Activated naive CD4-positive, alpha-beta T cell treated with anti-CD3 and anti-CD28 coated beads for 36 hours (primary cell): ENCODE measurements at regions of chr19 and their contacts with region 1.

Region 1: GRCh38 chr19:54674021-54674617 is 11.3 kb downstream of the LILRB4 start:
- DNase-seq: no peak
- H3K4me3 Mint-ChIP-seq: no peak overlapping the region
- H3K27ac Mint-ChIP-seq: no peak overlapping the region
- H3K4me1 Mint-ChIP-seq: no peaks in the 10 kb centered on the region
- H3K27me3 Mint-ChIP-seq: peaks cover 15% of the 10 kb centered on the region

Region 2: GRCh38 chr19:54297760-54298305 is 376.3 kb before region 1 on chr19:
- CTCF ChIA-PET with region 1: no interaction called
- intact Hi-C with region 1: no loop called
- DNase-seq: no peak
- H3K4me3 Mint-ChIP-seq: no peak overlapping the region
- H3K27ac Mint-ChIP-seq: no peak overlapping the region
- H3K4me1 Mint-ChIP-seq: no peaks in the 10 kb centered on the region
- H3K27me3 Mint-ChIP-seq: peaks cover 15% of the 10 kb centered on the region

Region 3: DNA sequence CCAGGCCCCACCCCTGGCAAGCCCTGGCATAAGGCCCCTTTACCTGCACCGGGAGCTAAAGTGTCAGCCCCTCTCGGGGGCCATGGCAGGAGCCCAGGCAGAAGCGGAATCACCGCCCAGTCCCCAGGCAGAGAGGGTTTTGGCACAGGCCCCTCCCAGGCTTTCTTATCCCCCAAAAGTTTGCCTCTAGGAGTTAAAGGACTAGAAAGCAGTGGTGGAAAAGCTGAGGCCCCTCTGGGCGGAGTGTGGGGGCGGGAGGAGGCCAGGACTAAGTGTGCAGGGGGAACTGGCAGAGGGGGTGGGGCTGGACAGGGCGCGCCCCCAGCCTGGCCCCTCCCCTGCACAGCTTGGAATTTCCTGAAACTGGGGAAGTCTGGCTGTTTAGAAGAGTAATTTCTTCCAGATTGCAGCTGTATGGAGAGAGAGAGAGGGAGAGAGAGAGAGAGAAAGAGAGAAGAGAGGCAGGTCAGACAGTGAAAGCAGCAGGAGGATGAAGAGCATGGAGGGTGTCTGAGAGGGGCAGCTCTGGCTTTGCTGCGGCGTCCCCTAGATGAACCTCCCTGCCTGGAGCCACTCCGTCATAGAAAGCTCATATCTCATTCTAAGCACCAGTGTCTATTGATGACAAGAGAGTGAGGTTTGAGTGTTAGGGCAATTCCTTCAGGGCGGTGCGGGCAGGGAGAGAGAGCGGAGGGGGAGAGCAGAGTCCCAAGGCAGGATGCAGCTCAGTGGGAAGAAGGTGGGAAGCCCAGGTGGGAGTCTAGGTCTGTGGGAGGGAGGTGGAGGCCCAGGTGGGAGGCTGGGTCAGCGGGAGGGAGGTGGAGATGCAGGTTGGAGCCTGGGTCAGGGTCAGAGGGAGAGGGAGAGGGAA is 200.9 kb before region 1 on chr19 and contains the start of gene CDC42EP5:
- CTCF ChIA-PET with region 1: interaction called, 62 read pairs
- intact Hi-C with region 1: no loop called
- DNase-seq: no peak
- H3K4me3 Mint-ChIP-seq: no peak within 1 kb of the TSS
- H3K27ac Mint-ChIP-seq: no peak within 1 kb of the TSS
- H3K4me1 Mint-ChIP-seq: peaks cover 9% of the 10 kb centered on the region
- H3K27me3 Mint-ChIP-seq: peaks cover 38% of the 10 kb centered on the region
- total RNA-seq, gene CDC42EP5: not detected

Region 4: DNA sequence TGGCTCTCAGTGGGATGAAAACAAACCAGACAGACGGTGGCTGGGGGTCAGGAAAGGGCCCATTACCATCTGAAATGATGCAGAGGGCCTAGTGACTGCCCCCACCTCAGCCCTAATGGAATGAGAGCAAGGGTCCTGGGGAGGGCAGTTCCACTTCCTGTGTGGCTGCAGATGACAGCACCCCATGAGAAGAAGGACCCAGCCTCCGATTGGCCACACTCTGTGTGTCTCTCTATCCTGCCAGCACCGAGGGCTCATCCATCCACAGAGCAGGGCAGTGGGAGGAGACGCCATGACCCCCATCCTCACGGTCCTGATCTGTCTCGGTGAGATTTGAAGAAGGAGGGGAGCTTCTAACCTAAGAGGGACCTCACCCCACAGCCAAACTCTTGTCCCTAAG is 43.3 kb before region 1 on chr19:
- CTCF ChIA-PET with region 1: no interaction called
- intact Hi-C with region 1: no loop called
- DNase-seq: no peak
- H3K4me3 Mint-ChIP-seq: no peak overlapping the region
- H3K27ac Mint-ChIP-seq: no peak overlapping the region
- H3K4me1 Mint-ChIP-seq: no peaks in the 10 kb centered on the region
- H3K27me3 Mint-ChIP-seq: peaks cover 43% of the 10 kb centered on the region

Region 5: DNA sequence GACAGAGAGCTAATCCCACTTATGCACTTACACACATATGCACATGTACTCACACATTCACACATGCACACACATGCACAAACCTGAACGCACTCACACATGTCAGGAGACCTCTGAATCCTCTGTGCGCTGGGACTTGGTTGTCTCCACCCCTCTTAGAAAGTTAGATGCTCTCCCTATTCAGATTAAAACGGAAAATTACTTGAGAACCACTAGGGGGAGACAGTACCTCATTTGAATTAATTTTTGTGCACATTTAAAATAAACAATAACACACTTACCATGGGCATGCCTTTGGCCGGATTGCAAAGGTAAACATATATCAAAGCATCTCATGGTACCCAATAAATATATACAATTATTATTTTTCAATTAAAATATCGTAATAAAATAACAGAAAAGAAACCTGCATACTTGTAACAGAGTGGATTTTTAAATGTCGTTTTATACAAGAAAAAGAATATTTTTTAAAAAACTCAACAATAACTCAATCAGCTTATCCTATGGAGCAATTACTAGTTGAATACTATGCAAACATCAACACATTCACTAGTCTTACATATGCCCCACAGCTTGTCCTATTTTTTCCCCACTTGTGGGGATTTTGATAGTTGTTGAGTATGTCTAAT is 20.8 kb before region 1 on chr19:
- CTCF ChIA-PET with region 1: interaction called, 29 read pairs
- intact Hi-C with region 1: no loop called
- DNase-seq: no peak
- H3K4me3 Mint-ChIP-seq: no peak overlapping the region
- H3K27ac Mint-ChIP-seq: no peak overlapping the region
- H3K4me1 Mint-ChIP-seq: no peaks in the 10 kb centered on the region
- H3K27me3 Mint-ChIP-seq: no peaks in the 10 kb centered on the region

Region 6: DNA sequence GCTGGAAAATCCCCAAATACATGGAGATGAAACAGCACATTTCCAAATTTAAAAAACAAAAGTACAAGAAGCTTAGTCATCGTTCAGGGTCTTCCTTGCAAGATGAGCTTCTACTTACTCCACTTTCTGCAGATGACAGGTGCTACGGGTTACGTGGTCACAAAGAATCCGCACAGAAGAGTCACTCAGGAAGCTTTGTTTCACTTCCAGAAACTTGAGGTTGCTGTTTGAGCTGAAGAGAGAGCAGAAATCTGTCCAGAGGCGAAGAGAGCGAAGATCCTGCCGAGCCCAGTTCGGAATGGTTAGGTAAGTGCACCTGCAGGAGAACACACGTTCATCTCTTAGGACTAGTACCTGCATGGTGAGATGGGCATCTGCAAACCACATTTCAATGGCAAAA is 263.8 kb after region 1 on chr19:
- CTCF ChIA-PET with region 1: no interaction called
- intact Hi-C with region 1: no loop called
- DNase-seq: peak; percentile 30
- H3K4me3 Mint-ChIP-seq: no peak overlapping the region
- H3K27ac Mint-ChIP-seq: no peak overlapping the region
- H3K4me1 Mint-ChIP-seq: peaks cover 3% of the 10 kb centered on the region
- H3K27me3 Mint-ChIP-seq: peaks cover 9% of the 10 kb centered on the region

Region 7: DNA sequence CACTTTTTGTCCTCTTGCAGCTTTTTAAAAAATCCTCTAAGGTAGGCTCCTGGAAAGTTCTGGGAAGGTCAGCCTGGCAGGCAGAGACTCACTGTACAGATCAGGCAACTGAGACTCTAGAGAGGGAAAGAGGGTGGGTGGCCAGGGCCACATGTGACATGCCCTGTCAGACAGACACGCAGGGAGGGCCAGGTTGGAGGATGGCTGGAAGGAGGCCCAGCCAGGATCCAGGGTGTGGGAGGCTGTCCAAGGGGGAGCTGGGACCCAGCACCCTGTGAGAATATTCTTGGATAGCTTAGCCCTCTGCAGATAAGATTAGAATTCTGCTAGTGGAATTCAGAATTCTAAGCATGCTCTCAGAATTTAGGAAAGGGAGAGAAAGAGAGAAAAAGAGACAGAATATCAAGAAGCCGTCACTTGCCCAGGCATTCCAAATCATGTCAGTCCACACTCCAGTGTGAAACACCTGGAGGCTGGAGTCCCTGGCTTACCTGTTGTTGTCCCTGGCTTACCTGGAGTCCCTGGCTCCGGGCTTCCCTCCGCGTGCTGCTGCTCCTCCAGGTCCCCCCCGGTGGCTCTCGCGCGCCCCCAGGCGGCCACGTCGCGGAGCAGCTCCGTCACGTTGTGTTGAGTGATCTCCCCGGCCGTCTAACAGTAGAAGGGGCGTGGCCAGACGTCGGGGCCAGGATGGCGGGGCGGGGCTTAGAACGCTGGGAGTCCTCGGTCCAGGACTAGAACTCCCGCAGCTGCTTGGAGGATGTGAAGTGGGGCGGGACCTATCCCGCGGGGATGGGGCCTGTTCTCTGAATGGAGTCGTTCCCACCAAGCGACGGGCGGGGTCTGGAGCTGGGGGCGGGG is 486.2 kb after region 1 on chr19:
- CTCF ChIA-PET with region 1: no interaction called
- intact Hi-C with region 1: no loop called
- DNase-seq: peak; percentile 94
- H3K4me3 Mint-ChIP-seq: no peak overlapping the region
- H3K27ac Mint-ChIP-seq: no peak overlapping the region
- H3K4me1 Mint-ChIP-seq: peaks cover 9% of the 10 kb centered on the region
- H3K27me3 Mint-ChIP-seq: peaks cover 48% of the 10 kb centered on the region